Esophagus muscularis mucosa (tissue), 4 donors: ENCODE measurements at regions of chr17 and their contacts with region 1.

Region 1: GRCh38 chr17:75877752-75878173 is 618 bp downstream of the TRIM47 start:
- DNase-seq: no peak
- H3K4me3 ChIP-seq: peak overlapping the region; percentile 80 to 95 (median 86)
- H3K27ac ChIP-seq: peak overlapping the region; percentile 97 to 99 (median 98)
- H3K4me1 ChIP-seq: peaks cover 49 to 56% (median 51%) of the 10 kb centered on the region in 4 donors
- H3K27me3 ChIP-seq: no peaks in the 10 kb centered on the region
- CTCF ChIP-seq: peak in 2 of 3 experiments; percentile 39 to 69
- EP300 ChIP-seq: no peak
- POLR2A ChIP-seq: no peak

Region 2: GRCh38 chr17:75779231-75779986 is 98.4 kb before region 1 on chr17:
- intact Hi-C with region 1: loop called (anchors 5 kb)
- DNase-seq: peak; percentile 100
- H3K4me3 ChIP-seq: peak overlapping the region; percentile 80 to 97 (median 94)
- H3K27ac ChIP-seq: peak overlapping the region; percentile 98 to 100 (median 100)
- H3K4me1 ChIP-seq: peaks cover 32 to 59% (median 52%) of the 10 kb centered on the region in 4 donors
- H3K27me3 ChIP-seq: no peaks in the 10 kb centered on the region
- CTCF ChIP-seq: no peak
- EP300 ChIP-seq: peak; percentile 91
- POLR2A ChIP-seq: peak; percentile 100

Region 3: GRCh38 chr17:75845049-75845860 is 32.5 kb before region 1 on chr17:
- intact Hi-C with region 1: loop called (anchors 5 kb)
- DNase-seq: no peak
- H3K4me3 ChIP-seq: peak overlapping the region in 2 of 4 donors; percentile 5 to 28
- H3K27ac ChIP-seq: peak overlapping the region; percentile 71 to 73 (median 72)
- H3K4me1 ChIP-seq: peaks cover 58 to 63% (median 61%) of the 10 kb centered on the region in 4 donors
- H3K27me3 ChIP-seq: no peaks in the 10 kb centered on the region
- CTCF ChIP-seq: peak; percentile 68 to 92 (median 69)
- EP300 ChIP-seq: no peak
- POLR2A ChIP-seq: peak; percentile 27

Region 4: DNA sequence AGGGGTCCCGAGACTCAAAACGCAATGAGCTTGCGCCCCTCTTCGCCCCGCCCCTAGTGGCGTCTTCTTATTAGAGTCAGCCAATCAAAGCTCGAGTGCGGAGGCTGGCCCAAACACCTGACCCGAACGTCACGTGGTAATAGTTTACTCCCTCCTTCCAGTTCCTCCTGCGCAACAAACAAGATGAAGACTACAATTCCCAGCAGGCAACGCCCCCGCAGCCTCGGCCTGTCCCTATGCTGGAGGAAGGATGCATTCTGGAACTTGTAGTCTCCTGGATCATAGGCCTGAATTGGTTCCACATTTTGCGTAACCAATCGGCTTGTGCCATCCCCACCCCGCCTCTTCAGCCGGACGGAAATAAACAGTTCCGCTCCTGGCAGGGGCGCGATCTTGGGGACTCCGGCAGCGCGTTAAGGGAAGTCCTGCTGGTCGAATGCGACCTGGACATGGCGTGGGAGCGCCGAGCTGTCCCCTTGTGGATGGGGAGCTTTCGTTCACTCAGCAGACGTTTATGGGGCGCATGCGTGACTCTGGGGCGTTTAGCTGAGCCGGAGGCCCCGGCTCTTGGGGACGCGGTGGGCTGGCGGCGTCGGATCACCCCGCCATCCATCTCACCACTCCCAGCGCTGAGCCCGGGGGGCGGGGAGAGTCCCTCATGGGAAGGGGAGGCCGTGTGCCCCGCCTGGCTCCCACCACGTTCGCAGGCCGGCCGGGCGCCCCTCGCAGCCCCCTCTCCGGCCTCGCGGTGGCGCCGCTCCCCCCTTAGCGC is 22.3 kb before region 1 on chr17 and contains the start of gene WBP2:
- intact Hi-C with region 1: loop called (anchors 1 kb)
- DNase-seq: peak; percentile 100
- H3K4me3 ChIP-seq: peak within 1 kb of the TSS; percentile 79 to 92 (median 86)
- H3K27ac ChIP-seq: peak within 1 kb of the TSS; percentile 98 to 100 (median 100)
- H3K4me1 ChIP-seq: peaks cover 51 to 63% (median 57%) of the 10 kb centered on the region in 4 donors
- H3K27me3 ChIP-seq: no peaks in the 10 kb centered on the region
- CTCF ChIP-seq: peak; percentile 58 to 73 (median 62)
- EP300 ChIP-seq: no peak
- POLR2A ChIP-seq: peak; percentile 97
- total RNA-seq, gene WBP2: 48.2 to 95.8 (median 85.2) TPM

Region 5: GRCh38 chr17:75896415-75897159 is 18.8 kb after region 1 on chr17 and contains the start of gene TRIM65:
- intact Hi-C with region 1: loop called (anchors 2 kb)
- DNase-seq: no peak
- H3K4me3 ChIP-seq: peak within 1 kb of the TSS; percentile 73 to 99 (median 77)
- H3K27ac ChIP-seq: peak within 1 kb of the TSS; percentile 89 to 98 (median 96)
- H3K4me1 ChIP-seq: peaks cover 25 to 55% (median 52%) of the 10 kb centered on the region in 4 donors
- H3K27me3 ChIP-seq: no peaks in the 10 kb centered on the region
- CTCF ChIP-seq: peak; percentile 51 to 62 (median 54)
- EP300 ChIP-seq: no peak
- POLR2A ChIP-seq: peak; percentile 66
- total RNA-seq, gene TRIM65: 13.3 to 36.4 (median 27.4) TPM